ENCODE measurements at regions of chr7 and their contacts with region 1.

Region 1: GRCh38 chr7:135274495-135275268 is 41.0 kb downstream of the STRA8 start:
- DNase-seq: peak; percentile 9
- H3K4me3 ChIP-seq: no peak overlapping the region
- CTCF ChIP-seq: peak; percentile 81

Region 2: GRCh38 chr7:135253898-135254771 is 20.5 kb before region 1 on chr7:
- CTCF ChIA-PET with region 1: interaction called, 38 read pairs
- POLR2A ChIA-PET with region 1: no interaction called
- DNase-seq: peak; percentile 5
- H3K4me3 ChIP-seq: no peak overlapping the region
- CTCF ChIP-seq: no peak

Region 3: GRCh38 chr7:135260930-135261721 is 13.6 kb before region 1 on chr7:
- CTCF ChIA-PET with region 1: interaction called, 38 read pairs
- POLR2A ChIA-PET with region 1: no interaction called
- DNase-seq: no peak
- H3K4me3 ChIP-seq: no peak overlapping the region
- CTCF ChIP-seq: no peak

Region 4: GRCh38 chr7:135389971-135390370 is 115.3 kb after region 1 on chr7:
- CTCF ChIA-PET with region 1: no interaction called
- POLR2A ChIA-PET with region 1: no interaction called
- DNase-seq: no peak
- H3K4me3 ChIP-seq: no peak overlapping the region
- CTCF ChIP-seq: no peak

Region 5: DNA sequence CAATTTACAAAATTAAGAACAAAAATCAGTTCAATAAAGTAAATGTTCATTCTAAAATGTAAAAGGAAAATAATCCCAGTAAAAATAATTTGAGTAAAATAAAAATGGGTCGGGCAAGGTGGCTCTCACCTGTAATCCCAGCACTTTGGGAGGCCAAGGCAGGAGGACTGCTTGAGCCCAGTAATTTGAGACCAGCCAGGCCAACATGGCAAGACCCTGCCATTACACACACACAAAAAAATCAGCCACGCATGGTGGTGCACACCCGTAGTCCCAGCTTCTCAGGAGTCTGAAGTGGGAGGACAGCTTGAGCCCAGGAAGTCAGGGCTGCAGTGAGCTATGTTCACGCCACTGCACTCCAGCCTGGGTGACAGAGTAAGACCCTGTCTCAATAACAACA is 200.8 kb after region 1 on chr7:
- CTCF ChIA-PET with region 1: no interaction called
- POLR2A ChIA-PET with region 1: no interaction called
- DNase-seq: no peak
- H3K4me3 ChIP-seq: no peak overlapping the region
- CTCF ChIP-seq: no peak

Region 6: GRCh38 chr7:135501403-135501802 is 226.7 kb after region 1 on chr7:
- CTCF ChIA-PET with region 1: interaction called, 11 read pairs
- POLR2A ChIA-PET with region 1: no interaction called
- DNase-seq: no peak
- H3K4me3 ChIP-seq: no peak overlapping the region
- CTCF ChIP-seq: no peak

Region 7: GRCh38 chr7:135558337-135558767 is 283.7 kb after region 1 on chr7:
- CTCF ChIA-PET with region 1: interaction called, 95 read pairs
- POLR2A ChIA-PET with region 1: no interaction called
- DNase-seq: no peak
- H3K4me3 ChIP-seq: peak overlapping the region; percentile 86
- CTCF ChIP-seq: peak; percentile 49

Region 8: DNA sequence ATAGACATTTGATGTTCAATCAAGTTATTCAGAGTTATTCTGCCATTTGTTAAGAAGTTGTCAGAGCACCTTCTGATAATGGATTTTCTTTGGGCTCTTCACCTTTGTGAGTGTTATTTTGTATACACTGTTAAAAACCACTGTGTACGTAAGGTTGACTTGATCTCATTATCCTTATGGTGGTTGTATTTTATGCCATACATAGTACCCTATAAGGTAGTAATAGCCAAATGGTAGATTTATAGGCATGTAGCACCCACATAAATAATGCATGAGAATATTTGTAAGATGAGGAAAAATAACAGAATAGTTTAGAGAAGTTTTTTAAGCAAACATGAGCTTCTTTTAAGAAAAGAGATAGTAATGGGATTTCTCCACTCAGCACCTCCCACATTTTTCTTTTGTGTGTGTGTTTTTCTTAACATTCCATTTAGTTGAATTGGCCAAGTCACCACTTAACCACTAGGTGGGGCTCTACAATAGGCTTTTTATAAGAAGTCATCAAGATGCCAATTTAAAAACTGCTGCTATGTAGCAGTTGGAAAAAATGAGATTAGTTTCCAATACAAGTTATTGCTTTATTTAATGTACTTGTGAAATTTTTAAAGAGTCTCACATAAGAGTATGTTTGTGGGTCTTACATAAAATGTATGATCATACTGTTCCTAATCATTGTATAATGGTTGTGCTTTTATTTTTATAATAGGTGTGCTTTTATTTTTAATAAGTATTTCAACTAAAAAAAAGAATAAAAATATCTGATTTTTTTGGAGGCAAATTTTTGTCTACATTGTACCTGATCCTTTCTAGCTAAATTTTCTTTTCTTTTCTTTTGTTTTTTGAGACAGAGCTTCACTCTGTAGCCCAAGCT is 346.5 kb after region 1 on chr7:
- CTCF ChIA-PET with region 1: interaction called, 11 read pairs
- POLR2A ChIA-PET with region 1: no interaction called
- DNase-seq: peak; percentile 78
- H3K4me3 ChIP-seq: no peak overlapping the region
- CTCF ChIP-seq: peak; percentile 48

Measured in AG04449 (cell line).